ENCODE measurements at regions of chr19 and their contacts with region 1.

Region 1: DNA sequence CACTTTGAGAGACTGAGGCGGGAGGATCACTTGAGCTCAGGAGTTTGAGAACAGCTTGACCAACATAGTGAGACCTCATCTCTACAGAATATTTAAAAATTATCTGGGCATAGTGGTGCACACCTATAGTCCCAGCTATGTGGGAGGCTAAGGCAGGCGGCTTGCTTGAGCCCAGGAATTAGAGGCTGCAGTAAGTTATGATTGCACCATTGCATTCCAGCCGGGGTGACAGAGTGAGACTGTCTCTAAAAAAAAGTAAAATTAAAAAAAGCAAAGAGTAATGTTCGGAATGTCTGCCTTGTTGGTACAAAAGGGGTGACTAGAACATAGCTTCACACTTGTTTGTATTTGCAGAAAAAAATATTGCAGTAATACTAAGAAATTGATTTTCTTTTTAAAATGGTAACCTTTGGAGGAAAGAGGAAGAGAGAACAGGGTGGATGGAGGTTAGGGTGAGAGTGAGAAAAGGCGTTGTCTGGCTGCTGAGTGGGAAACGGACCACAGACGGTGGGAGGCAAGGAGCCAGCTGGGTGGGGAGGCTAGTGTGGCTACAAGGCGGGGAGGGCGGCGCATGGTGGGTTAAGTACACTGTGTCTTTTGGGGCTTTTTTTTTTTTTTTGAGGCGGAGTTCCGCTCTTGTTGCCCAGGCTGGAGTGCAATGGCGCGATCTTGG is 10.2 kb downstream of the PPP1R14A start:
- DNase-seq: no peak
- ATAC-seq: no peak
- H3K4me3 ChIP-seq: no peak overlapping the region
- H3K27ac ChIP-seq: no peak overlapping the region
- H3K4me1 ChIP-seq: peaks cover 3% of the 10 kb centered on the region; the same call in 2 of the 3 replicates
- CTCF ChIP-seq: no peak
- EP300 ChIP-seq: no peak
- POLR2A ChIP-seq: no peak
- RAD21 ChIP-seq: no peak

Region 2: DNA sequence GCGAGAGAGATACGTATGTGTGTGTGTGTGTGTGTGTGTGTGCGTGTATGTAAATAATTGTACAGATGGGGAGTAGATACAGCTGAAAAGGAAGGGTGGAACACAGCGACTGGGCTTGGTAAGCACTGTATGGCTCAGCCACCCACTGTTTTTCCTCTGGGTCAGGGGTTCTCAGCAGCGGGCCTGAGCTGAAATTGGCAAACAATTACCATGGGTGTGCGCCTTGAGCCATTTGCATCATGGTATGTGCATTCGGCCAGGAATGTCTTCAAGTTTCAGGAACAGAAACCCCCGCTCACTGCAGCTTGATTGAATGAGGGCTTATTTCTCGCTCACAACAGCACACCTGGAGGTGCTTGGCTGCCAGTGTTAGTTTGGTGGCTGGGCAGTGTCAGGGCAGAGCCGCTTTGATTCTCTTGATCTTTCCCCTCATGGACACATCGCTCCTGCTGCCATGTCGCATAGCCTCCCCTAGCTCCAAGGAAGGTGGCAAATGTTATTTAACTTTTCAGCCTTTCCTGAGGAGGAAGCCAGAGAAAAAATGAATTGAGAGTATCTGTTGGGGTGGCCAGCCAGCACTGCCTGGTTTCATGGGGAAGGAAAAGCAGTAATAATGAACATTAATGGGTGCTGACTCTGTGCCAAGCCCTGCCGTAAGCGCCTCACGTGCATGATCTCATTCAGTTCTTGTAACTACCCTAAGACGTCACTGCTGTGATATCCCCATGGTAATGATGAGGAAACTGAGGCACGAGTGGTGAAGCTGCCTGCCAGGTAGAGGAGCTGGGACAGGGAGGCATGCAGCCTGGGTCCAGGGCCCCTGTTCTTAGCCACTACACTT is 212.1 kb before region 1 on chr19:
- CTCF ChIA-PET with region 1: no interaction called
- POLR2A ChIA-PET with region 1: no interaction called
- DNase-seq: no peak
- ATAC-seq: no peak
- H3K4me3 ChIP-seq: no peak overlapping the region
- H3K27ac ChIP-seq: no peak overlapping the region
- H3K4me1 ChIP-seq: peaks cover 22% of the 10 kb centered on the region
- CTCF ChIP-seq: no peak
- EP300 ChIP-seq: no peak
- POLR2A ChIP-seq: no peak
- RAD21 ChIP-seq: no peak

Region 3: DNA sequence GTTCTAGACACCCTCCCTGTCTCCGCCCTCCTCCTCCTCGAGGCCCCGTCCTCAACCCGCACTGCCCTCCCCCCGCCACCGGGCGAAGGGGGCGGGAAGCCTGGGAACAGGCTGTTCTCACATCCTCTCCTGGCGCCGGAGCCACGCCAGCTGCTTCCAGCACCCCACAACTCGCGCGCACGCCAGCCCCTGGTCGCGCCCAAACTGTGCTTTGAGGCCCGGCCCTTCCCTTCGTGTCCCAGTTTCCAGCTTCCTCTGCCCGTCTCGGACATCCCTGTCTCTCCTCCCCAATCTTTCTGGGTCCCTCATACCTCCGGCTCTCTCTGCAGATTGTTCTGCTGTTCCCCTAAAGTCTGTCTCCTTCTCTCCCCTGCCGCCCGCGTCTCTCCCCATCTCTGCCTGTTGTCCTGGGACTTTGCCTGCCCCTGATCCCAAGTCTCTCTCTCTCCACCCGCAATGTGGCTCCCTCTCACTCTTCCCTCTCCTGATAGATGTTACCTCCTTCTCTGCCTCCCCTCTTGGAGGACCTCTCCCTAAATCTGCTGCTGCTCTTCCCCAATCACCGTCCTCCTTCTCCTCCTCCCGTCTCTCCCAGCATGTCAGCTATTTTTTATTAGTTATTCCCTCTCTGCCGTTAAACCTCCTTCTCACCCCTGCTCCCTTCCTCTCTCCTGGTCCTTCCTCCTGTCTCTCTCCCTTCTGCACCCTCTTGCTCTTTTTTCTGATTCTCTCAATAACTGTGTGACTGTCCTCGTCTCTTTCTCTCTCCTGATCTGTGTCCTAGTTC is 36.1 kb before region 1 on chr19:
- CTCF ChIA-PET with region 1: no interaction called
- POLR2A ChIA-PET with region 1: no interaction called
- DNase-seq: no peak
- ATAC-seq: peak; percentile 1 to 15; a peak in 3 of 6 replicates
- H3K4me3 ChIP-seq: no peak overlapping the region
- H3K27ac ChIP-seq: peak overlapping the region in 1 of 2 experiments; percentile 13; a peak in 1 of 6 replicates
- H3K4me1 ChIP-seq: peaks cover 31% of the 10 kb centered on the region
- CTCF ChIP-seq: no peak
- EP300 ChIP-seq: no peak
- POLR2A ChIP-seq: no peak
- RAD21 ChIP-seq: no peak

Region 4: DNA sequence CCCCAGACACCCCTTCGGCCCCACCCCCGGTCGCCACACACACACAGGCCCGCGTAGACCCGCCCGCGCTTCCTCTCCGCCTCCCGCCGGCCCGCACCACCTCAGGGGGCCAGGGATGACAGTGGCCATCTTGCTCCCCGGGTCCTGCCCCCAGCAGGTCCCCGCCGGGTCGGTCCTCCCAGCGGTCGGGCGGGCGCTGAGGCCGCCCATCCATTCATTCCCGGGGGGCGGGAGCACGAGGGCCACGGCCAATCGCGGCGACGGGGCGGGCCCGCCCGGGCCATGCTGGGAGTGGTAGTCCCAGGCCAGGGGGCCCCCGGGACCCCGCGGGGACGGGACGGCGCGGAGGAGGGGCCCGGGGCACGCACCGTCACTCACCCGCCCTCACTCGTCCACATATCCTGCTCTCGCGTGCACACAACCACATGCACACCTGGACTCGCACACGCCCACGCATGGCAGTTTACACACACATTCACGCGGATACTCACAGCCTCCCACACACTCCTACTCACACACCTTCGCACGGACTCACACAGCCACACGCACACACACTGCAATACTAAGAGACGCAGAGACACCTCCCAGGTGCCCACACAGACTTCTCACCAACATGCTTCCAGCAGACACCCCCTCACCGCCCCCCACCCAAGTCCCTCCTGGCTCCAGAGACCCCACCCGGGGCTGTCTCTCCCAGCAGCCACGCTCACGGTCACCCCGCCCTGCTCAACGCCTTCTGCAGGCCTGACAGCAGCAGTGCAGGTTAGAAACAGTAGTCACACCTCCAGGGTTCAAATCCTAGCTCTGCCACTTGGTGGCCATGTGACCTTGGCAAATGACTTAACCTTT is 21.7 kb before region 1 on chr19 and contains the start of gene DPF1:
- CTCF ChIA-PET with region 1: interaction called, 613 read pairs
- POLR2A ChIA-PET with region 1: interaction called, 3 read pairs
- DNase-seq: peak; percentile 92 to 100
- ATAC-seq: peak; percentile 79 to 93
- H3K4me3 ChIP-seq: peak within 1 kb of the TSS; percentile 48
- H3K27ac ChIP-seq: peak within 1 kb of the TSS; percentile 34 to 80
- H3K4me1 ChIP-seq: peaks cover 24% of the 10 kb centered on the region
- CTCF ChIP-seq: peak; percentile 42
- EP300 ChIP-seq: no peak
- POLR2A ChIP-seq: peak; percentile 23; the same call in 1 of the 2 replicates
- RAD21 ChIP-seq: peak; percentile 37 to 48; a peak in 4 of 5 replicates
- polyA plus RNA-seq, gene DPF1: 1.3 and 2.1 TPM in 2 replicates

Region 5: GRCh38 chr19:38277969-38278680 is 32.2 kb after region 1 on chr19:
- CTCF ChIA-PET with region 1: interaction called, 33 read pairs
- POLR2A ChIA-PET with region 1: no interaction called
- DNase-seq: no peak
- ATAC-seq: no peak; a peak in 1 of 6 replicates
- H3K4me3 ChIP-seq: no peak overlapping the region
- H3K27ac ChIP-seq: peak overlapping the region in 1 of 2 experiments; percentile 25; a peak in 2 of 6 replicates
- H3K4me1 ChIP-seq: peaks cover 34% of the 10 kb centered on the region
- CTCF ChIP-seq: no peak
- EP300 ChIP-seq: no peak
- POLR2A ChIP-seq: no peak
- RAD21 ChIP-seq: no peak

Region 6: GRCh38 chr19:38290631-38291157 is 44.7 kb after region 1 on chr19:
- CTCF ChIA-PET with region 1: interaction called, 33 read pairs
- POLR2A ChIA-PET with region 1: no interaction called
- DNase-seq: peak in 1 of 2 experiments; percentile 61
- ATAC-seq: peak; percentile 42 to 58
- H3K4me3 ChIP-seq: no peak overlapping the region
- H3K27ac ChIP-seq: peak overlapping the region; percentile 9 to 62; a peak in 3 of 6 replicates
- H3K4me1 ChIP-seq: peaks cover 16% of the 10 kb centered on the region
- CTCF ChIP-seq: no peak
- EP300 ChIP-seq: no peak
- POLR2A ChIP-seq: no peak
- RAD21 ChIP-seq: no peak

Region 7: DNA sequence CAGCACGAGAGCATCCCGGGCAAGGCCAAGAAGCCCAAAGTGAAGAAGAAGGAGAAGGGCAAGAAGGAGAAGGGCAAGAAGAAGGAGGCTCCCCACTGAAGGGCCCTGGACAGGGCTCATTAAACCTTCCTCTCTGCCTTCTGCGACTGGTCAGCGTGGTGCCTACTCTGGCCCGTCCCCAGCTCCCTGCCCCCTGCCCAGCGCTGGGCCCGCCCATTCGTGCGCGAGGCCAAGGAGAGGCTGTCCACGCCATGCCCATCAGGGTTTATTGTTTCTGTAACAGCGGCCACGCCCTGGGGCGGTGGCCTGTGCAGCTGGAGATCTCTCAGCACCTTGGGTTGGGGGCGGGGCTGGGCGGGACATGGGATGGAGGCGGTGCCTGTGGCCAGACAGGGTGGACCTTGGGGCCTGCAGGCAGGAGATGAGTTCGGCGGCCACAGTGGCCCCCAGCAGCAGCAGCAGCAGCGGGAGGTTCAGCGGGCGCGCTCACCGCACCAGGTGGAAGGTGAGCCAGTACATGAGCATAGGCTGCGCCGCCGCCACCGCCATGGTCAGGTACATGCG is 59.0 kb after region 1 on chr19:
- CTCF ChIA-PET with region 1: interaction called, 49 read pairs
- POLR2A ChIA-PET with region 1: interaction called, 8 read pairs
- DNase-seq: peak; percentile 100
- ATAC-seq: peak; percentile 60 to 85
- H3K4me3 ChIP-seq: peak overlapping the region; percentile 60
- H3K27ac ChIP-seq: peak overlapping the region; percentile 92 to 95
- H3K4me1 ChIP-seq: peaks cover 50% of the 10 kb centered on the region
- CTCF ChIP-seq: no peak
- EP300 ChIP-seq: no peak; a peak in 1 of 5 replicates
- POLR2A ChIP-seq: peak; percentile 82
- RAD21 ChIP-seq: peak; percentile 1 to 43; a peak in 2 of 5 replicates

Region 8: DNA sequence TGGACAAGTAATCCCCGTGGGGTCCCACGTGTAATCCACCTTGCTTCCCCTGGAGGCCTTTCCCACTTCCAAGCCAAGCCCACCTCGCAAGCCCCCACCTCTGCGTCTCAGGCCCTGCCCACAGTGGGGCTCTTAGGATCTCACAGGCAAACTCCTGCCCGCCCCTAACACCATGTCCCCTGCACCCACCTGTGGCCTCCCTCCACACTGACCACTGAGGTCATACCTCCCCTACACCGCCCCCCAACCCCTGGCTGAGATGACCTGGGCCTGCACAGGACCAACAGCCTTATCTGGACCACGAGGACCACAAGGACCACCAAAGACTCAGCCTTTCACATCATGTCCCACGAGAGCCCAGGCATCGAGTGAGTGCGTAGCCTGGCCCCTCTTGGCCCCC is 121.8 kb after region 1 on chr19:
- CTCF ChIA-PET with region 1: interaction called, 43 read pairs
- POLR2A ChIA-PET with region 1: no interaction called
- DNase-seq: no peak
- ATAC-seq: no peak
- H3K4me3 ChIP-seq: no peak overlapping the region
- H3K27ac ChIP-seq: no peak overlapping the region
- H3K4me1 ChIP-seq: peaks cover 4% of the 10 kb centered on the region; the same call in 1 of the 3 replicates
- CTCF ChIP-seq: no peak
- EP300 ChIP-seq: no peak
- POLR2A ChIP-seq: no peak
- RAD21 ChIP-seq: no peak

Region 9: DNA sequence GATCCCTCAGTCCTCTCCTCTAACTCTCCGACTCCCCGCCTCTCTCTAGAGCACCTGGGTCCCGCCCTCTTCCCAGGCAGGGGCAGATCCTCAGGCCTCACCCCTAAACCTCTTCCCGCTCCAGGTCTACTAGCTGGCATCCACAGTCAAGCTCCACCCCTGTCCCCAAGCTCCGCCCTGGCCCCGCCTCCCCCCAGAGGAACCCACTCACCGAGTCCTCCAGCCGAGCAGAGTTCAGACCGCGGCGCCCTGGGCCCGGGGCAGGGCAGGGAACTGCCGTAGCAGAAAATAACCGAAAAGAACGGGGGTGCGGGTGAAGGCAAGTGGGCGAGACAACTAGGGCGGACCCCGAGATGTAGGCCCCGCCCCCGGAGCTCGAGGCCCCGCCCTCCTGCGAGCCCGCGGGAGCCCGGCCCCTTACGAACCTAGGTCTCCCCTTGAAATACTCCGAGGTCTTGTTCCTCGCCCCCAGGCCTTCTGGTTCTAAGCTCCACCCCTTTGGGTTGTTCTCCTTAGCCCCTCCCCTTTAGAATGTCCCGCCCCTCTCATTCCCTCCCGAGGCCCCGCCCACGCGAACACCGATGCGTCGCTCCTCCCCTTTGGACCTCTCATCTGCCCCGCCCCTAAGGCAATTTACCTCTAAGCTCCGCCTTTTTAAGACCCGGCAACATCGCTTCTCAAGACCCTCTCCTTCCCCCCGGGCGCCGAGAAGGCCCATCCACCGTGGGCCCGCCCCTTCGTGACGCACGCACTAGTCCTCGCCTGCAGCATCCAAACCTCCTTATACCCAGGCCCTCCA is 141.8 kb after region 1 on chr19 and contains the start of gene GGN:
- CTCF ChIA-PET with region 1: interaction called, 63 read pairs
- POLR2A ChIA-PET with region 1: interaction called, 4 read pairs
- DNase-seq: peak; percentile 98 to 100
- ATAC-seq: peak; percentile 53 to 78
- H3K4me3 ChIP-seq: peak within 1 kb of the TSS; percentile 61
- H3K27ac ChIP-seq: peak within 1 kb of the TSS; percentile 71 to 90
- H3K4me1 ChIP-seq: peaks cover 35% of the 10 kb centered on the region
- CTCF ChIP-seq: no peak
- EP300 ChIP-seq: no peak
- POLR2A ChIP-seq: no peak; the same call in 1 of the 2 replicates
- RAD21 ChIP-seq: no peak
- polyA plus RNA-seq, gene GGN: not detected in 2 replicates

Measured in A549 (cell line).